AG04450 (cell line): ENCODE measurements at regions of chr4 and their contacts with region 1.

Region 1: GRCh38 chr4:41287050-41287449 is 30.3 kb downstream of the UCHL1 start:
- DNase-seq: peak; percentile 16
- H3K4me3 ChIP-seq: no peak overlapping the region
- H3K27ac ChIP-seq: no peak overlapping the region
- H3K27me3 ChIP-seq: no peaks in the 10 kb centered on the region
- CTCF ChIP-seq: no peak

Region 2: GRCh38 chr4:40856822-40857362 is 430.2 kb before region 1 on chr4:
- CTCF ChIA-PET with region 1: interaction called, 10 read pairs
- POLR2A ChIA-PET with region 1: no interaction called
- DNase-seq: no peak
- H3K4me3 ChIP-seq: peak overlapping the region; percentile 53
- H3K27ac ChIP-seq: no peak overlapping the region
- H3K27me3 ChIP-seq: no peaks in the 10 kb centered on the region
- CTCF ChIP-seq: no peak

Region 3: GRCh38 chr4:41448934-41449333 is 161.9 kb after region 1 on chr4:
- CTCF ChIA-PET with region 1: no interaction called
- POLR2A ChIA-PET with region 1: no interaction called
- DNase-seq: no peak
- H3K4me3 ChIP-seq: no peak overlapping the region
- H3K27ac ChIP-seq: no peak overlapping the region
- H3K27me3 ChIP-seq: no peaks in the 10 kb centered on the region
- CTCF ChIP-seq: no peak